Activated B cell treated with CpG ODN at 0.5 μM for 24 hours (primary cell): ENCODE measurements at regions of chr2 and their contacts with region 1.

Region 1: GRCh38 chr2:201118121-201118960 is 2.4 kb downstream of the CFLAR start:
- DNase-seq: peak; percentile 78
- ATAC-seq: peak; percentile 70
- H3K4me3 Mint-ChIP-seq: peak overlapping the region; percentile 100
- H3K27ac Mint-ChIP-seq: peak overlapping the region; percentile 99
- H3K4me1 Mint-ChIP-seq: peaks cover 77% of the 10 kb centered on the region
- H3K27me3 Mint-ChIP-seq: no peaks in the 10 kb centered on the region
- CTCF ChIP-seq: no peak

Region 2: GRCh38 chr2:200728630-200729029 is 389.7 kb before region 1 on chr2:
- CTCF ChIA-PET with region 1: no interaction called
- POLR2A ChIA-PET with region 1: no interaction called
- intact Hi-C with region 1: no loop called
- DNase-seq: no peak
- ATAC-seq: no peak
- H3K4me3 Mint-ChIP-seq: no peak overlapping the region
- H3K27ac Mint-ChIP-seq: no peak overlapping the region
- H3K4me1 Mint-ChIP-seq: no peaks in the 10 kb centered on the region
- H3K27me3 Mint-ChIP-seq: peaks cover 9% of the 10 kb centered on the region
- CTCF ChIP-seq: no peak

Region 3: DNA sequence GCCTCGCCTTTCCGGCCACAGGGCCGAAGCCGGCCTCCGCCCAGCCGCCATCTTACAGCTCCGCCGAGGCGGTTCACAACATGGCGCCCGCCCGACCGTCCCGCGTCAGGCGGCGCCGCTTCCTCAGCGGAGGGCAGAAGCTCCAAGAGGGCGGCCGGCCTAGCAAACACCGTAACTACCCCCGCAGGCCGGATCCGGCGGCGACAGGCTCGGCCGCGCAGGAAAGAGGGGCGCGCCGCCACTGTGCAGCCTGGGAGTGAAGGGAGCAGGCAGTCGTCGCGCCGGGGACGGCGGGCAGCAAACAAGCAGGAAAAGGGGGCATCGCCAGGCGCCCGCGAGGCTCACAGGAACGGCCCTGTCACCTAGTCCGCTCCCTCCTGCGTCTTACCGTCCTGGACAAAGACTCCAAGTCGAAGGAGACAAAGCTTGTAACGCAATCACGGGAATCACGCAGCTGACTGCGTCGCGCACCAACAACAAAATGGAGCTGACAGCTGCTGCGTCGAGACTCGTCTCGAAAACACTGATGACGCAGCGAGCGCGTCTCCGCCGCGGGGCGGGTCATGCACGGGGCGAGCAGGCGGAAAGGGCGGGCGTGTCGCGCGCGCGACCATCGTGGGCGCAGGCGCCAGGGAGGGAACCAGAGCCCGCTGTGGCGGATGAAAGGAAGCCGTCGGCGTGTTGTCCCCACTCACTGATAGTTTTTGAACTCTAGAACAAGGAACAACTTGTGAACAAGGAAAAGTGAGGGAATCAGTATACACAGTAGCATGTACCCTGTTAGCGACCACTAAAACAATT is 254.0 kb before region 1 on chr2 and contains the start of gene CLK1:
- CTCF ChIA-PET with region 1: no interaction called
- POLR2A ChIA-PET with region 1: interaction called, 52 read pairs
- intact Hi-C with region 1: loop called (anchors 2 kb)
- DNase-seq: peak; percentile 90
- ATAC-seq: peak; percentile 82
- H3K4me3 Mint-ChIP-seq: peak within 1 kb of the TSS; percentile 100
- H3K27ac Mint-ChIP-seq: peak within 1 kb of the TSS; percentile 100
- H3K4me1 Mint-ChIP-seq: peaks cover 41% of the 10 kb centered on the region
- H3K27me3 Mint-ChIP-seq: no peaks in the 10 kb centered on the region
- CTCF ChIP-seq: no peak
- total RNA-seq, gene CLK1: 173 and 203 TPM in 2 replicates

Region 4: GRCh38 chr2:200963124-200963917 is 155.0 kb before region 1 on chr2 and contains the start of gene ORC2:
- CTCF ChIA-PET with region 1: interaction called, 10 read pairs
- POLR2A ChIA-PET with region 1: interaction called, 42 read pairs
- intact Hi-C with region 1: loop called (anchors 1 kb)
- DNase-seq: peak; percentile 94
- ATAC-seq: peak; percentile 93
- H3K4me3 Mint-ChIP-seq: peak within 1 kb of the TSS; percentile 97
- H3K27ac Mint-ChIP-seq: peak within 1 kb of the TSS; percentile 97
- H3K4me1 Mint-ChIP-seq: peaks cover 63% of the 10 kb centered on the region
- H3K27me3 Mint-ChIP-seq: no peaks in the 10 kb centered on the region
- CTCF ChIP-seq: no peak
- total RNA-seq, gene ORC2: 36.8 and 38.1 TPM in 2 replicates

Region 5: DNA sequence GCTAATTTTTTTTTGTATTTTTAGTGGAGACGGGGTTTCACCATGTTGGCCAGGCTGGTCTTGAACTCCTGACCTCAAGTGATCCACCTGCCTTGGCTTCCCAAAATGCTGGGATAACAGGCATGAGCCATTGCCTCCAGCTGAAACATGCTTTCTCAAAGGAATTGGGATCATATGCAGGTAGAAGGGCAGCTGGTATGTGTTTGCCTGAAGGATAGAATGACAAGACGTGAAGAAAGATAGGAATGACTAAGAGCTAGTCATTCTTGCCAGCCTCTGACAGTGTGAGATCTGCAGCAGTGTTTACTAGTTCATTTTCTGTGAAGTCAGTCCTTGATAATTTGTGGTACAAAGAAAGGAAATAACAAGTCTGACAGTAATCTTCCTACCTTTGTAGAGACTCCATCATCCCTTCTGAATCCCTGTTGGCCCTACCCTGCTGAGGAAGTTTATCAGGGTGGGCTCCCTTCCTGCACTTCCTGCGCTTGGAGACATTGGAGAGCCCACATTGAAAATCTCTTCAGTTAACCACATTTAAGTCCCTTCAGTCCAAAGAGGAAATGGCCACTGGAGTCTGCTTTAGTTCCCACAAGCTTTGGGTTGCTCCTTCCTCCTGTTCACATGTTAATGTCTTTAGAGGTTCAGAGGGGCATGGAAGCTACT is 12.3 kb after region 1 on chr2:
- CTCF ChIA-PET with region 1: interaction called, 24 read pairs
- POLR2A ChIA-PET with region 1: no interaction called
- intact Hi-C with region 1: loop called (anchors 1 kb)
- DNase-seq: no peak
- ATAC-seq: no peak
- H3K4me3 Mint-ChIP-seq: peak overlapping the region; percentile 87
- H3K27ac Mint-ChIP-seq: peak overlapping the region; percentile 92
- H3K4me1 Mint-ChIP-seq: peaks cover 82% of the 10 kb centered on the region
- H3K27me3 Mint-ChIP-seq: no peaks in the 10 kb centered on the region
- CTCF ChIP-seq: no peak

Region 6: DNA sequence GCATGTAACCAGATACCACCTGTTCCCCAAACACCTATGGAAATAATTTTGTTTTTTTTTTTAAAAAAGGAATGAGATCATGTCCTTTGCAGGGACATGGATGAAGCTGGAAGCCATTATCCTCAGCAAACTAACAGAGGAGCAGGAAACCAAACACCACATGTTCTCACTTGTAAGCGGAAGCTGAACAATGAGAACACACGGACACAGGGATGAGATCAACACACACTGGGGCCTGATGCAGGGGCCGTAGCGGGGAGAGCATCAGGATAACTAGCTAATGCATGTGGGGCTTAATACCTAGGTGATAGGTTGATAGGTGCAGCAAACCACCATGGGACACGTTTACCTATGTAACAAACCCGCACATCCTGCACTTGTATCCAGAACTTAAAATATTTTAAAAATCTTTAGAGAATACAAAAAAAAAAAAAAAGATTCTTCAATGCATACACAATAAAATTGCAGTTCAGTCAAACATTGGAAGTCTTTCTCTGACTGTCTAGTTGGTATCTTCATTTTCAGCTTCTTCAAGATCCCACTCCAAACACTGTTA is 53.0 kb after region 1 on chr2:
- CTCF ChIA-PET with region 1: interaction called, 7 read pairs
- POLR2A ChIA-PET with region 1: interaction called, 41 read pairs
- intact Hi-C with region 1: no loop called
- DNase-seq: no peak
- ATAC-seq: no peak
- H3K4me3 Mint-ChIP-seq: no peak overlapping the region
- H3K27ac Mint-ChIP-seq: no peak overlapping the region
- H3K4me1 Mint-ChIP-seq: peaks cover 32% of the 10 kb centered on the region
- H3K27me3 Mint-ChIP-seq: no peaks in the 10 kb centered on the region
- CTCF ChIP-seq: no peak

Region 7: DNA sequence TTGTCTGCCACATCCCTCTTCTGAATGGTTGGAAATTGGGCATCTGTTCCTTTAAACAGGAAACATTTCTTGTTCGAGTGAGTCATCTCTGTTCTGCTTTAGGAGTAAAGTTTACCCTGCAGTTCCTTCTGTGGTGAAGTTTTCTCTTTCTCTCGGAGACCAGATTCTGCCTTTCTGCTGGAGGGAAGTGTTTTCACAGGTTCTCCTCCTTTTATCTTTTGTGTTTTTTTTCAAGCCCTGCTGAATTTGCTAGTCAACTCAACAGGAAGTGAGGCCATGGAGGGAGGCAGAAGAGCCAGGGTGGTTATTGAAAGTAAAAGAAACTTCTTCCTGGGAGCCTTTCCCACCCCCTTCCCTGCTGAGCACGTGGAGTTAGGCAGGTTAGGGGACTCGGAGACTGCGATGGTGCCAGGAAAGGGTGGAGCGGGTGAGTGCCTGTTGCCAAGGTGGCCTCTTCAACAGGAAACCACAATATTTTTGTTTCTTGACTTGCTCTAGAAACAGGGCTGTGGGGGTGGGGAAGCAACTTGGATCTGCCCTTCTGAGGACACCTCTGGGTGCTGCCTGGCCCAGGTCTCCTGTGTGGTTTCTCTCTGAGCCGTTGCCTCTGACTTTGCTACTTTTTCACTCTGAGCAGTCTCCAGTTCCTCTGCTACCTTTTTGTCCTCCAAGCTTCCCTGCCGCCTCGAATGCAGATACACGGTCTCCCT is 139.8 kb after region 1 on chr2:
- CTCF ChIA-PET with region 1: no interaction called
- POLR2A ChIA-PET with region 1: interaction called, 12 read pairs
- intact Hi-C with region 1: loop called (anchors 2 kb)
- DNase-seq: peak; percentile 68
- ATAC-seq: peak; percentile 61
- H3K4me3 Mint-ChIP-seq: peak overlapping the region; percentile 90
- H3K27ac Mint-ChIP-seq: peak overlapping the region; percentile 98
- H3K4me1 Mint-ChIP-seq: peaks cover 83% of the 10 kb centered on the region
- H3K27me3 Mint-ChIP-seq: no peaks in the 10 kb centered on the region
- CTCF ChIP-seq: no peak

Region 8: GRCh38 chr2:201344663-201345366 is 226.5 kb after region 1 on chr2:
- CTCF ChIA-PET with region 1: no interaction called
- POLR2A ChIA-PET with region 1: no interaction called
- intact Hi-C with region 1: no loop called
- DNase-seq: no peak
- ATAC-seq: peak; percentile 50
- H3K4me3 Mint-ChIP-seq: no peak overlapping the region
- H3K27ac Mint-ChIP-seq: peak overlapping the region; percentile 1
- H3K4me1 Mint-ChIP-seq: peaks cover 8% of the 10 kb centered on the region
- H3K27me3 Mint-ChIP-seq: no peaks in the 10 kb centered on the region
- CTCF ChIP-seq: no peak